Psoas muscle (tissue), 8 donors: ENCODE measurements at regions of chr6 and their contacts with region 1.

Region 1: GRCh38 chr6:18264219-18264922 is at the start of gene DEK:
- DNase-seq: peak; percentile 90 to 93
- ATAC-seq: peak; percentile 79 to 83 (median 82)
- H3K4me3 ChIP-seq: peak within 1 kb of the TSS; percentile 88
- H3K27ac ChIP-seq: peak within 1 kb of the TSS; percentile 92
- H3K4me1 ChIP-seq: peaks cover 41% of the 10 kb centered on the region
- H3K27me3 ChIP-seq: no peaks in the 10 kb centered on the region
- CTCF ChIP-seq: peak; percentile 72
- total RNA-seq, gene DEK: 65.0 to 91.0 (median 69.2) TPM

Region 2: GRCh38 chr6:18216411-18216810 is 48.0 kb before region 1 on chr6:
- intact Hi-C with region 1: no loop called
- DNase-seq: no peak
- ATAC-seq: no peak
- H3K4me3 ChIP-seq: no peak overlapping the region
- H3K27ac ChIP-seq: no peak overlapping the region
- H3K4me1 ChIP-seq: no peaks in the 10 kb centered on the region
- H3K27me3 ChIP-seq: no peaks in the 10 kb centered on the region
- CTCF ChIP-seq: no peak

Region 3: DNA sequence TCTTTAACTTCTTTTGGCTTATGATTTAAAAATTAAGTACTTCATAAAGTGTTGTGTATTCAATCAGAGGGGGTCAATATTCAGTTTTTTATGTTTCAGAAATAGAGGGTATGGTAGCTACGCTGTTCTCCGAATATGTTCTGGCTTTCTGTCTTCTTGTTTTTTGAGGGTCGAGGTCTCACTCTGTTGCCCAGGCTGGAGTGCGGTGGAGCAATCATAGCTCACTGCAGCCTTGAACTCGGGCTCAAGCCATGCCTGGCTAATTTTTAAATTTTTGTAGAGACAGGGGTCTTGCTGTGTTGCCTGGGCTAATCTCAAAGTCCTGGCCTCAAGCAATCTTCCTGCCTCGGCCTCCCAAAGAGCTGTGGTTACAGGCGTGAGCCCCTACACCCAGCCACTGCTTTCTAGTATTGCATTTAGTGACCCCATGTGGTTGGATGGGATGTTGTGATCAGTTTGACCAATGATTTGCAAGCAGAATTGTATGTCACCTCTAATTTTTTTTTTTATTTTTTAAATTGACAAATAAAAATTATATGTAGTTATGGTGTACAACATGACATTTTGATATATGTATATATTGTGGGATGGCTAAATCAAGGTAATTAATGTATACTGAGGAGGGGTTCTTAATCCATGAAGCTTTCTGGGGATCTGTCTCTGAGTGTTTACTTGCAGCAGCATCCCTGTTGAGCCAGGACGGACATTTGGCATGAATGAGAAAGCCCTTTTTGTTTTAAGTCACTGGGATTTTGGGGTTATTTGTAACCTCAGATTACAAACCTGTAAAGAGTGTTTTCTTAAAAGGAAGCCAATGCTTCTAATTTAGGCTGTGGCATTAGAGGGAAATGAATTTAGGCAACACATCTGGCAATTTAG is 38.4 kb after region 1 on chr6:
- intact Hi-C with region 1: loop called in 1 of 2 experiments (anchors 5 kb)
- DNase-seq: no peak
- ATAC-seq: peak; percentile 84 to 92 (median 88)
- H3K4me3 ChIP-seq: no peak overlapping the region
- H3K27ac ChIP-seq: peak overlapping the region; percentile 50
- H3K4me1 ChIP-seq: peaks cover 10% of the 10 kb centered on the region
- H3K27me3 ChIP-seq: no peaks in the 10 kb centered on the region
- CTCF ChIP-seq: peak; percentile 38

Region 4: DNA sequence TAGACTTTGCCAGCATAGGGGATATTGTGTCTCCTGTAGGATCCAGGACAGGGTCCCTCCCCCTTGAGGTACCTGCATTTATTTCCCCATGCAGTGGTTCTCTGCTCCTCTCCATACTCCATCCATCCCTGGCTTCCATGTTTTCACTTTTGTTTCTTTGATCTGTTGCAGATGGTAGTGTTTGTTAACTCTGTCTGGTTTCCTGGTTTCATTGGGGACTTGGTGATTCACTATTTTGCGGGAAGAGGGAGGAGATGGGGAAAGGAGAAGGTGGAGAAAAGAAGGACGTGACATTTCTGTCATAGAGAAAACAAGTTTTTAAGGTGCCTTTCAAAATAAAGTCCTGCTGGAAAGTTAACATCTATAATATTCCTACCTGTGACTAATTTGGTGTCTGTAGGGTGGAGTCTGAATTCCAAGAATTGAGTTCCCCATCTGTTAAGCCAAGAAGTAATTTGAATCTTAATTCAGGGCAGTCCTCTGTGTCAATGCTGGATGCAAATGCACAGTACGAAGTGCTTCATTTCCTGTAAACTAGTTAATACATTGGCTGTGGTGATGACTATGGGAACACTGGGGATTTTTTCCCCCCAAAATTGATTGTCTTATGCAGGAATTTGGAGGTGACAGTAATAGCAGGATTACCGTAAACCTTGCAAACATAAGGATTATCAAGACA is 115.9 kb after region 1 on chr6:
- intact Hi-C with region 1: loop called in 1 of 2 experiments (anchors 5 kb)
- DNase-seq: no peak
- ATAC-seq: peak in 3 of 4 donors; percentile 12 to 42 (median 36)
- H3K4me3 ChIP-seq: peak overlapping the region; percentile 43
- H3K27ac ChIP-seq: peak overlapping the region; percentile 87
- H3K4me1 ChIP-seq: peaks cover 17% of the 10 kb centered on the region
- H3K27me3 ChIP-seq: no peaks in the 10 kb centered on the region
- CTCF ChIP-seq: no peak

Region 5: DNA sequence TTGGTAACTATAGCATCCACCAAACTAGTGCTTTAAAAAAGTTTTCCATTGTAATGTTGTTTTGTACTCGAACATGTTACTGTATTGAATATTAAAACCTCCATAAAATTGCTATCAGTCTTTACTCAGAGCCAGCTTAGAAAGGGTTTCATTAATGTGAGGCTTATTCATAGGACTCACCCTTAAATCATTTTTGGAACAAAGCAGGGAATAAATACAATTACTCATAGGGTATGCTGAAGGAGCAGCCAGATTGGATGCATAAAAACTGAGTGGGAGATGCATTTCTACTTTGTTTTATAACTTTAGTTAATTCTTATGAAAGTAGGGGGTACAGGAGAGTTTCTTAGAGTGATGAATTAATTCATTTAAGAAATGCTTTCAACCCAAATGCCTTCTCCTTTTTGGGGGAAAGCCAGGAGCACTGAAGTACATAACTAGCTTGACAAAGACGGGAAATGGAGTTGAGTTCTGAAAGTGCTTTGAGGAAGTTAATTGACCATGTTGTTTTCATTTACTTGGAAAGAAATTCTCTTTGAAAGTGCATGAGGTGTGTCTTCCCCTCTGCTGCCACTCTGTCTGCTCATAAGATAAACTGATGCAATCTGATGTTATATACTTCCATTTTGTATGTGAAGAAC is 213.1 kb after region 1 on chr6:
- intact Hi-C with region 1: no loop called
- DNase-seq: no peak
- ATAC-seq: no peak
- H3K4me3 ChIP-seq: no peak overlapping the region
- H3K27ac ChIP-seq: peak overlapping the region; percentile 11
- H3K4me1 ChIP-seq: no peaks in the 10 kb centered on the region
- H3K27me3 ChIP-seq: no peaks in the 10 kb centered on the region
- CTCF ChIP-seq: no peak